MCF 10A (cell line): ENCODE measurements at regions of chr3 and their contacts with region 1.

Region 1: DNA sequence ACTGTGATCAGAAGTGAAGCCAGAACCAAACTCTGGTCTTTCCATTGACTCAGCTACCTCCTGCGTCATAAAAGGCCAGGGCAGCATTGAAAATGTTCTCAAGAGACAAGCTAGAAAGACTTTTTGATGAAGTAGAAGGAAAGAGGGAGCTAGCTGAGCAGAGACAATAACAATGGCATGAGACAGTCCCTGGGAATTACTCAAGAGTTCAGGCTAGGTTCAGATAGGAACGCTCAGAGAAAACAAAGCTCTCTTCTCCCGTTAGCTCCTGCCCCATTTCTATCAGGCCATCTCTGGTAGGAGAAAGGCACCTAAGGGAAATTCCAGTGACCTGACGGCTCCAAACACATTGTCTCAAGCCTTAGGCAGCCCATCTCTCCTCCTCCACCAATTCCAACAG is 7.0 kb upstream of the OXTR start:
- DNase-seq: no peak
- H3K4me3 Mint-ChIP-seq: no peak overlapping the region
- H3K27ac Mint-ChIP-seq: no peak overlapping the region
- H3K4me1 Mint-ChIP-seq: peaks cover 6% of the 10 kb centered on the region
- H3K27me3 Mint-ChIP-seq: no peaks in the 10 kb centered on the region
- CTCF ChIP-seq: no peak

Region 2: GRCh38 chr3:8702560-8702959 is 73.8 kb before region 1 on chr3:
- CTCF ChIA-PET with region 1: no interaction called
- POLR2A ChIA-PET with region 1: no interaction called
- intact Hi-C with region 1: no loop called
- DNase-seq: peak; percentile 20
- H3K4me3 Mint-ChIP-seq: no peak overlapping the region
- H3K27ac Mint-ChIP-seq: no peak overlapping the region
- H3K4me1 Mint-ChIP-seq: no peaks in the 10 kb centered on the region
- H3K27me3 Mint-ChIP-seq: no peaks in the 10 kb centered on the region
- CTCF ChIP-seq: peak; percentile 16

Region 3: GRCh38 chr3:8793242-8793641 is 16.8 kb after region 1 on chr3:
- CTCF ChIA-PET with region 1: no interaction called
- POLR2A ChIA-PET with region 1: no interaction called
- intact Hi-C with region 1: no loop called
- DNase-seq: peak; percentile 68
- H3K4me3 Mint-ChIP-seq: no peak overlapping the region
- H3K27ac Mint-ChIP-seq: no peak overlapping the region
- H3K4me1 Mint-ChIP-seq: no peaks in the 10 kb centered on the region
- H3K27me3 Mint-ChIP-seq: no peaks in the 10 kb centered on the region
- CTCF ChIP-seq: no peak

Region 4: GRCh38 chr3:8869613-8870012 is 93.2 kb after region 1 on chr3:
- CTCF ChIA-PET with region 1: no interaction called
- POLR2A ChIA-PET with region 1: no interaction called
- intact Hi-C with region 1: loop called (anchors 10 kb)
- DNase-seq: peak; percentile 89
- H3K4me3 Mint-ChIP-seq: no peak overlapping the region
- H3K27ac Mint-ChIP-seq: peak overlapping the region; percentile 92
- H3K4me1 Mint-ChIP-seq: peaks cover 27% of the 10 kb centered on the region
- H3K27me3 Mint-ChIP-seq: no peaks in the 10 kb centered on the region
- CTCF ChIP-seq: no peak